GM18951 (cell line): ENCODE measurements at regions of chr17 and their contacts with region 1.

Region 1: GRCh38 chr17:77999413-78000173 is 41.1 kb downstream of the TNRC6C start:
- POLR2A ChIP-seq: no peak

Region 2: GRCh38 chr17:77542551-77543490 is 456.8 kb before region 1 on chr17:
- in situ Hi-C with region 1: loop called (anchors 25 kb)
- POLR2A ChIP-seq: no peak

Region 3: DNA sequence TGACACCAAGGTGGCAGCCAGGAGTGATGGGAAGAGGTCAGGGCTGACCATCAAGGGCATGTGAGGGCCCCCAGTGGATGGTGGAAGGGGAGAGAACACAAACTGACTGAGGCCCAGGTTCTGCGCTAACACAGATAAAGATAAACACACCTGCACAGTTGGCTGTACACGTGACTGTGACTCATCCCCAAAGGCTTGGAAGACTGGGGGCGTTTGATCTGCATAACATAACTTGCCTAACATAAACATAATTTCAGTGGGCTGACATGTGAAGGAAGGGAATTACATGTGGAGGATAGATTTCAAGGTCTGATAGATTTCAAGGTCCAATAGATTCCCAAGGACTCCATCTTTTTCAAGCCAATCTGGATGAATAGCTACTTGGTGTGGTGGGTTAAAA is 142.0 kb before region 1 on chr17:
- in situ Hi-C with region 1: no loop called
- POLR2A ChIP-seq: no peak

Region 4: GRCh38 chr17:78289802-78290363 is 290.3 kb after region 1 on chr17:
- in situ Hi-C with region 1: no loop called
- POLR2A ChIP-seq: no peak